ENCODE measurements at regions of chr16 and their contacts with region 1.

Region 1: DNA sequence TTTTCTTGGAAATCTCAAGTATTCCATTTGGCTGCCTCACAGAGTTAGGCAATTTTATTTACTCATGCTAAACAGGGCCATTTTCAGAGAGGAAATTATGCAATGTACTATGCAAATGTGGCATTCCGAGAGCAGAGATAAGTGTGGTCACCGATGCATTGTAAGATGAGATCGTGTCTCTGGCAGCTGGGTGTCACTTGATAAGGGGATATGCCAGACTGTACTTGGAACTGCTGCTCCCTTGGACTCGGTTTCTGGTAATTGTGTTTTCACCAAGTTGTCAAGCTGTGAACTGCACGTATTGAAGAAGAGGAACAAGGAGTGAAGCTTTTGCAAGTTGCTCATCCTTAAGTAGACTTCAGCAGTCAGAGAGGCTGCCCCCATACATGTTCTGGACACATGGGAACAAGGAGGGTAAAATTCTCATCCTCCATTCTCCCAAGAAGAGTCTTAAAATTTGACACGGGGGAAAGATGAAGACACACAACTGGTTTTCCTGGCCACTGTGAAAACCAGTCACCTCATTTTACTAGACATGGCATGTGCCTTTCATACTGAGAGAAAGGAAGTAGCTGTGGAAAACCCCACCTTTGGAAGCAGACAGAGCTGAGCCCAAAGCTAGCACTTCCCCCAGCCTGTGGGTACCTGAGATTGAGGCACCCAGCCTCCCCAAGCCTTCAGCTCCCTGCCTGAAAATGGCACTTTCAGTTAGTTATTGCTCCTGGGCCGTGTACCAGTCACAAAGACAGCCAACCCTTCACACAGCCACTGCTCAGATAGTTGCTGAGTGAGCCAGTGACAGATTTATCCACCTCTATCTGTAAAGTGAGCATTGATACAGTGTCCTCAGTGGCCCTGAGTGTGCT is 150.7 kb downstream of the SOCS1 start:
- DNase-seq: peak; percentile 80 to 94 (median 85)
- ATAC-seq: peak; percentile 72
- H3K4me3 ChIP-seq: no peak overlapping the region
- H3K27ac ChIP-seq: peak overlapping the region; percentile 54
- H3K4me1 ChIP-seq: peaks cover 47 to 56% of the 10 kb centered on the region in 2 experiments
- H3K27me3 ChIP-seq: no peaks in the 10 kb centered on the region
- CTCF ChIP-seq: no peak
- EP300 ChIP-seq: peak; percentile 99
- POLR2A ChIP-seq: no peak
- RAD21 ChIP-seq: peak; percentile 31 to 45

Region 2: GRCh38 chr16:10971560-10971961 is 133.7 kb before region 1 on chr16:
- CTCF ChIA-PET with region 1: interaction called, 3 read pairs
- POLR2A ChIA-PET with region 1: no interaction called
- in situ Hi-C with region 1: no loop called
- intact Hi-C with region 1: loop called (anchors 2 kb)
- DNase-seq: peak; percentile 35 to 83 (median 50)
- ATAC-seq: peak; percentile 68
- H3K4me3 ChIP-seq: no peak overlapping the region
- H3K27ac ChIP-seq: peak overlapping the region; percentile 63; the same call in 1 of the 3 replicates
- H3K4me1 ChIP-seq: peaks cover 19 to 22% of the 10 kb centered on the region in 2 experiments
- H3K27me3 ChIP-seq: no peaks in the 10 kb centered on the region
- CTCF ChIP-seq: peak; percentile 68 to 92 (median 69)
- EP300 ChIP-seq: no peak; the same call in 1 of the 2 replicates
- POLR2A ChIP-seq: no peak
- RAD21 ChIP-seq: peak; percentile 92 to 96

Region 3: DNA sequence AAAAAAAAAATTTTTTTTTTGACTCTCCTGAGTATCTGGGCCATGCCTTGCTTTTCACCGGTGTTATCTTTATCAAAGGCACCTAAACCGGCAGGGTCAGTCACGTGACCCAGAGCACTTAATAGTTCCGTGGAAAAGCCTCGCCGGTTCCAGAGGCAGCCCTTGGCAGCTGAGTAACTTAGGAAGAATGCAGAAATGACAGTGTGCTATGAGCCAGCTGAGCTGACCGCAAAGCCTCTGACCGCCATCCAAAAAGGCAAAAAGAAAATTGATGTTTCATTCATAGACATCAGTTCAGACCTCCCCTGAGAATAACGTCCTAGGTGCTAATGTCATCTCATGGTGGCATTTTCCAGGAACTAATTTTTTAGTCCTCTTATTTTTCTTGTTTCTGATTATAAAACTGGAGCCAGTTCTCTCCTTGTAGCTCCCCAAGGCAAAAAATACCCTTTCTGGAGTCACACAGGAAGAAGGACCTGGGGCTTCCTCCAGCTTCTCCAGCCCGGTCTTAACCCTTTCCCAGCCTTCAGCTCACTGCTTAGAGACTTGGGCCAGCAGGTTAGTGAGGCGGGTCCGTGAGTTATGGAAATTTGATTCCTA is 28.2 kb after region 1 on chr16:
- CTCF ChIA-PET with region 1: no interaction called
- POLR2A ChIA-PET with region 1: interaction called, 10 read pairs
- in situ Hi-C with region 1: no loop called
- intact Hi-C with region 1: loop called (anchors 2 kb)
- DNase-seq: peak; percentile 69 to 90 (median 75)
- ATAC-seq: peak; percentile 50
- H3K4me3 ChIP-seq: no peak overlapping the region
- H3K27ac ChIP-seq: peak overlapping the region; percentile 22; the same call in 1 of the 3 replicates
- H3K4me1 ChIP-seq: peaks cover 42 to 54% of the 10 kb centered on the region in 2 experiments
- H3K27me3 ChIP-seq: no peaks in the 10 kb centered on the region
- CTCF ChIP-seq: no peak
- EP300 ChIP-seq: peak; percentile 39; the same call in 1 of the 2 replicates
- POLR2A ChIP-seq: no peak
- RAD21 ChIP-seq: peak in 1 of 2 experiments; percentile 15; a peak in 1 of 4 replicates

Region 4: GRCh38 chr16:11164482-11165270 is 59.4 kb after region 1 on chr16:
- CTCF ChIA-PET with region 1: no interaction called
- POLR2A ChIA-PET with region 1: interaction called, 4 read pairs
- in situ Hi-C with region 1: no loop called
- intact Hi-C with region 1: loop called (anchors 2 kb)
- DNase-seq: no peak
- ATAC-seq: no peak
- H3K4me3 ChIP-seq: no peak overlapping the region
- H3K27ac ChIP-seq: no peak overlapping the region
- H3K4me1 ChIP-seq: peaks cover 38 to 51% of the 10 kb centered on the region in 2 experiments
- H3K27me3 ChIP-seq: no peaks in the 10 kb centered on the region
- CTCF ChIP-seq: no peak
- EP300 ChIP-seq: no peak
- POLR2A ChIP-seq: no peak
- RAD21 ChIP-seq: no peak

Region 5: DNA sequence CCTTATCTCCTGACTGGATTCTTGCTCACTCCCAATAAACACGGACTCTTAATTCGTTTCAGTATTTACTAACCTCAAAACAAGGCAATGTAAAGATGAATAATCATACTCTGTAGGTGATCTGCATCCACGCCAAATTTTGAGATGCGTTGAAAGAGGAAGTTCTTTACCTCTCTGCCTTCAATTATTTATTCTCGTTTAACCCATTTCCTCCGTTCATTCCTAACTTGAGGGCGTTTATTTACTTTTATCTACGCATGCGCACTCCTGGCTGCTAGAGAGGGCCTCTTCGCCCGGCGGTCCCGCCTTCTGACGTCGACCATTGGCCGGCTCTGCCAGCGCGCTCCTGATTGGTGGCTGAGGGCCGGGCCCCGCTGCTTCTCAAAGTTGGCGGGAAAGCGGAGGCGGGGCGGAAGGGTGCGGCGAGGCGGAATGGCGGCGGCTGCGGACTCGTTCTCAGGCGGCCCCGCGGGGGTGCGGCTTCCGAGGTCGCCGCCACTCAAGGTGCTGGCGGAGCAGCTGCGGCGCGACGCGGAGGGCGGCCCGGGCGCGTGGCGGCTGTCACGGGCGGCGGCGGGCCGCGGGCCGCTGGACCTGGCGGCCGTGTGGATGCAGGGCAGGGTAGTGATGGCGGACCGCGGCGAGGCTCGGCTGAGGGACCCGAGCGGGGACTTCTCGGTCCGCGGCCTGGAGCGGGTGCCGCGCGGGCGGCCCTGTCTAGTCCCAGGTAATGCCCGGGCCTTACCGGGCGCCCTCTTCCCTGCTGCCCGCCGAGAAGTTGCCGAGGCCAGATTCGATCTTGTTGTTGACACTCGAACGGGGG is 240.0 kb after region 1 on chr16 and contains the start of gene RMI2:
- CTCF ChIA-PET with region 1: no interaction called
- POLR2A ChIA-PET with region 1: no interaction called
- in situ Hi-C with region 1: loop called (anchors 10 kb)
- intact Hi-C with region 1: no loop called
- DNase-seq: peak; percentile 98 to 100 (median 100)
- ATAC-seq: peak; percentile 99
- H3K4me3 ChIP-seq: peak within 1 kb of the TSS; percentile 75
- H3K27ac ChIP-seq: peak within 1 kb of the TSS; percentile 63
- H3K4me1 ChIP-seq: peaks cover 2 to 22% of the 10 kb centered on the region in 2 experiments; a peak in 4 of 5 replicates
- H3K27me3 ChIP-seq: no peaks in the 10 kb centered on the region
- CTCF ChIP-seq: no peak
- EP300 ChIP-seq: no peak
- POLR2A ChIP-seq: peak; percentile 63
- RAD21 ChIP-seq: no peak
- polyA plus RNA-seq, gene RMI2: 8.0 to 10.3 TPM